ENCODE measurements at regions of chr9 and their contacts with region 1.

Region 1: GRCh38 chr9:22147813-22148524 is 138.9 kb upstream of the CDKN2B start:
- DNase-seq: peak; percentile 24
- H3K4me3 Mint-ChIP-seq: no peak overlapping the region
- H3K27ac Mint-ChIP-seq: no peak overlapping the region
- H3K4me1 Mint-ChIP-seq: peaks cover 24% of the 10 kb centered on the region
- H3K27me3 Mint-ChIP-seq: peaks cover 23% of the 10 kb centered on the region

Region 2: DNA sequence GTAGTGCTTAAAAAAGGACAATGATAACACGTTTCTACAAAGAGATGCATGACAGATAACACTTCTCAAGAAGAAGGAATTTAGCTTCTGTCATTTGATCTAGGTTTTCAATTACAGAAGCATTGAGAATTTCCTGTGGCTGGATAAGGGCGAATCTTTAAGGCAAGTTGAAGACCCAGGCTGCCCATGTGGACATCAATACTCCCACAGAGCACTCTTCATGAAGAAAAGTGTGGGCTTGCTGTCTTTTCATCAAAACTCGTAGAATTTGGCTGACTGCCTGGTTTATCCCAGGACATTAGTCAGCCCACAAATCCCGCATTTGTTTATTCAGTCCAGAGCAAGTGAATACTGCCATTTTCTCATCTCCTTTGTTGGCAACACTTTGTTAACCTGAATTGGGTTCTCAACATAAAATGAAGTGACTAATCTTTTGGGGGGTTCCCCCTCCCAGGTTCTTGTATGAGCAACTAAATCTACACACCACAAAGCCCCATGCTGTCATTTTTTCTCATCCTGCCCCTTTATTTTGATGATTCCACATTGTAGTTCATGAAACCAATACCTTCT is 95.5 kb before region 1 on chr9:
- CTCF ChIA-PET with region 1: no interaction called
- POLR2A ChIA-PET with region 1: no interaction called
- intact Hi-C with region 1: loop called (anchors 1 kb)
- DNase-seq: peak; percentile 50
- H3K4me3 Mint-ChIP-seq: no peak overlapping the region
- H3K27ac Mint-ChIP-seq: no peak overlapping the region
- H3K4me1 Mint-ChIP-seq: peaks cover 26% of the 10 kb centered on the region
- H3K27me3 Mint-ChIP-seq: peaks cover 12% of the 10 kb centered on the region

Region 3: GRCh38 chr9:22175972-22176545 is 28.1 kb after region 1 on chr9:
- CTCF ChIA-PET with region 1: interaction called, 3 read pairs
- POLR2A ChIA-PET with region 1: no interaction called
- intact Hi-C with region 1: loop called (anchors 1 kb)
- DNase-seq: no peak
- H3K4me3 Mint-ChIP-seq: no peak overlapping the region
- H3K27ac Mint-ChIP-seq: no peak overlapping the region
- H3K4me1 Mint-ChIP-seq: peaks cover 7% of the 10 kb centered on the region
- H3K27me3 Mint-ChIP-seq: peaks cover 15% of the 10 kb centered on the region

Region 4: DNA sequence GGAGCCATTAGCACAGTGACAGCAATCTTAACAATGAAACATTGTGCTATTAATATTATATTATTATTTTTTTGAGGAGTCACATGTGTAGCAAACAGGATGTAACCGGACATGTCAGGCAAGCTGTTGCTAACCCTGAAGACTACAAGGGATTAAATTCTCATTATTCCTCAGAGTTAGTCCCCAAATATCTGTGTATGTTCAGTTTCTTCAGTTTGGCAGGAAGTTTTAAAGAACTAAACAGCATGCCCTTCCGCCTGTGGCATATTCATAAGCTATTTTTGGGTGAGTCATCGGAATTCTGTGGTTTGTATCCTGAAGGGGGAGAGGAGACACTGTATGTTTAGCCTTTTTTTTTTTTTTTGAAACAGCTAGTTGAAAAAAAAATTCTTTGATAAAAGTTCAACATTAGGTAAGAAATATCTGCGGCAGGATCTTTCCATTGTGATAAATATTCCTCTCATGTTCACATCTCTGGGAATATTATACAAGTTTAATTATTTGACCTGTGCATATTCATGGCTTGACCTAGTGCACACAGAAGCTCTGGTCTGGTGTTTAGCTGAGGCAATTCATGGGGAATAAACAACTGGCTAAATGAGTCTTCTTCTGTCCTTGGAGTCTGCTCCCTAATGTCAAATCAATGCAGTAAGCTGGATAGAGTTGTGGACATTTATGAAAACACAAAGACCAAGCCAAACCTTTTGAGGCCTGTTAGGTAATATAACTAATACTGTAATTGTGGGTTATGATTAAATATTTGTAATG is 63.8 kb after region 1 on chr9:
- CTCF ChIA-PET with region 1: no interaction called
- POLR2A ChIA-PET with region 1: no interaction called
- intact Hi-C with region 1: loop called (anchors 1 kb)
- DNase-seq: no peak
- H3K4me3 Mint-ChIP-seq: no peak overlapping the region
- H3K27ac Mint-ChIP-seq: no peak overlapping the region
- H3K4me1 Mint-ChIP-seq: peaks cover 32% of the 10 kb centered on the region
- H3K27me3 Mint-ChIP-seq: no peaks in the 10 kb centered on the region